Heart left ventricle (tissue), 16 donors: ENCODE measurements at regions of chr3 and their contacts with region 1.

Region 1: GRCh38 chr3:149038322-149038721 is 47.0 kb downstream of the GYG1 start:
- DNase-seq: no peak
- ATAC-seq: no peak
- H3K4me3 ChIP-seq: no peak overlapping the region
- H3K27ac ChIP-seq: peak overlapping the region in 1 of 12 donors; percentile 51
- H3K4me1 ChIP-seq: peaks cover 0 to 9% (median 0%) of the 10 kb centered on the region in 12 donors
- H3K27me3 ChIP-seq: no peaks in the 10 kb centered on the region
- CTCF ChIP-seq: no peak
- POLR2A ChIP-seq: no peak

Region 2: DNA sequence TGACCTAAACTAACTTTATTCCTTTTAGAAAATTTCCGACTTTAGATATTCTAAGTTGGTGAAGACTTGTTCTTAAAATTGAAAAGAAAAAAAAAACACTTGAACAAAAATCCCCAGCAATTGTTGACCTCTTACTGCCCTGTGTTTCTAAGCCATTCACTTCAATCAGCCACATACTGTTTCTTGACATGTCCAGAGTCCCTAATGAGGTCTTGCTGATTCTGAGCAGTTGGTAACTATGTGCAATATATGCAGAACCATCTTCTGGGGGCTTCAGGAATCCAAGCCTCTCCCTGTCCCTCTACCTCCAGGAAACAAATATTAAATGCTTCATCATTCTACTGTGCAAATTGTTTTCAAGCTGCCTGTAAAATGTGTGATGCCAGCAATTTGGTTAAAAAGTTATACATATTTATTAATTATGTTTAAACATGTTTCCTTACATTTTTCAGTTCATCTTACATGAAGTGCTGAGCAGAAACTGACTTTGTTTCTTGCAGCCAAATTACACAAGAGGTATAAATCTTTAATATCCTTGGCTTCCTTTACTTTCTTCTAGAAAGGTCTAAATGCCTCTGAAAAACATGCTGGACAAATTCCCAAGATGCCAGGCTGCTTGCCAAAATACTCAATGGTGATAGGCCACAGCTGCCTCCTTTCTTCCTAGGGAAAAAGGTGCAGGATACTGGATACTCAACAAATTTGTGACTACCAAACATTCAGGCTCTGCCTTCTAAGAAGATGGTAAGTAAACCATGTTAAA is 66.7 kb before region 1 on chr3:
- intact Hi-C with region 1: loop called in 1 of 10 experiments (anchors 10 kb)
- DNase-seq: peak in 1 of 5 donors; percentile 39
- ATAC-seq: no peak
- H3K4me3 ChIP-seq: no peak overlapping the region
- H3K27ac ChIP-seq: no peak overlapping the region
- H3K4me1 ChIP-seq: peaks cover 0 to 29% (median 8%) of the 10 kb centered on the region in 12 donors
- H3K27me3 ChIP-seq: no peaks in the 10 kb centered on the region
- CTCF ChIP-seq: no peak
- POLR2A ChIP-seq: no peak